HEK293 (cell line): ENCODE measurements at regions of chr1 and their contacts with region 1.

Region 1: GRCh38 chr1:64744492-64745180 is at the start of gene RAVER2:
- H3K4me3 ChIP-seq: peak within 1 kb of the TSS; percentile 94
- H3K27ac ChIP-seq: peak within 1 kb of the TSS; percentile 88
- H3K4me1 ChIP-seq: peaks cover 9% of the 10 kb centered on the region; the same call in 1 of the 2 replicates
- CTCF ChIP-seq: peak; percentile 94

Region 2: DNA sequence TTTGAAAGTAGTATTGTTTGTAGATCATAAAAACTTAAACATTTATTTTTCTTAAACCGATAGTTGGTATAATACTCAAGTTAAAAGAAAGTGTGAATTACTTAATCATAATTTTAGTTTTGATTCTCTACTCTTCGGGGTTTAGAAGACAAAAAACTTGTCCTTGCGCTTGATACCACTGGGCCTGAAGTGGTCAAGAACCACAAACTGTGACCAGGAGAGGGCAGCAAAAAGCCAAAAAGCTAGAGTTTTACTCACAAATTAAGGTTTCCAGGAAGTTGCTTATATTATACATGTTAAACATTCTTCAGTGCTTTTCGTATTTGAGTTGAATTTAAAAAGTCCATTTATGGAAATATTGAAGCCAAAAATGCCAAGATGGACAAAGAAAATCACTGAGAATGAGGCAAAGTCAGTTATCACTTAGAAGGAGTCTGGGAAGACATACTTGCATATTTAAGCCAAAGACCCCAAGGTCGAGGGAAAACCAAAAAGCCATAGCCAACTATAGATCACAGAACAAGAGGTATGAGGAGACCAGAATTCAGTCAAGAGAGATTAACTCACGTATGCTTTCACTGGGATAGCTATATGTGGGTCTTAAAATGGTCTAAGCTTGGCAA is 1187.2 kb before region 1 on chr1:
- CTCF ChIA-PET with region 1: interaction called, 10 read pairs
- POLR2A ChIA-PET with region 1: no interaction called
- H3K4me3 ChIP-seq: no peak overlapping the region
- H3K27ac ChIP-seq: no peak overlapping the region
- H3K4me1 ChIP-seq: no peaks in the 10 kb centered on the region
- CTCF ChIP-seq: no peak

Region 3: GRCh38 chr1:64654519-64655341 is 89.9 kb before region 1 on chr1:
- CTCF ChIA-PET with region 1: no interaction called
- POLR2A ChIA-PET with region 1: no interaction called
- H3K4me3 ChIP-seq: no peak overlapping the region
- H3K27ac ChIP-seq: no peak overlapping the region
- H3K4me1 ChIP-seq: no peaks in the 10 kb centered on the region
- CTCF ChIP-seq: no peak

Region 4: GRCh38 chr1:64675718-64676345 is 68.8 kb before region 1 on chr1:
- CTCF ChIA-PET with region 1: no interaction called
- POLR2A ChIA-PET with region 1: no interaction called
- H3K4me3 ChIP-seq: no peak overlapping the region
- H3K27ac ChIP-seq: no peak overlapping the region
- H3K4me1 ChIP-seq: no peaks in the 10 kb centered on the region
- CTCF ChIP-seq: no peak